ENCODE measurements at regions of chr14 and their contacts with region 1.

Region 1: DNA sequence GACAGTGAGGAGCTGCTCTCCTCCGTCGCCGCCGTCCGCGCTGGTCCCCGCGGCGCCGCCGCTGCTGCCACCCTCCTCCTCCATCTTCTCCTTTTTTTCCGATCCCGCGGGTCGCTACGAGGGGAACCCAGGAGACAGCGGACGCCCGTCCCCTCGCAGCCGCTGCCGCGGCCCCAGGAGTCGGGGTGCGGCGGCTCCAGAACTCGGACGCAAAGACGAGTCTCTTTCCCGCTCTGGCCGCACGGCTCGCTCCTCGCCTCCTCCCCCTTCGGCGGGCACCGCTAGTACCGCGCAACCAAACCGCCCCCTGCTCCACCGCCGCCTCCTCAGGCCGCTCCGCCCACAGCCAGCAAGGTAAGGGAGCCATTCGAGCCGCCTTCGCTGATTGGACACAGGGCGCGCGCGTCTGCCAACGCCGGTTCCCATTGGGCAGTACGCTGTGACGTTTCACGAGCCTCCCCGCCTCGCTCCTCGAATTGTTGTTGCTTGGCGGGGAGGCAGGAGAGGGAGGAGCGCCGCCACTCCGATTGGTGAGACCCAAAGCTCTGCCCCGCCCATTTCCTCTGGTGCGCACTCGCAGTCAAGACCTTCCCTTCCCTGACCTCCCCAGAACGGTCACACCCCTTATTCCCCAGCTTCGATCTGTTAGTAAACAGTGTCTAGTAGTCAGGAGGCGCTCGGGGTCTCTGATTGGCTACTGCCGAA is at the start of gene RPS6KA5:
- DNase-seq: peak; percentile 100
- ATAC-seq: peak; percentile 95
- H3K4me3 ChIP-seq: peak within 1 kb of the TSS; percentile 65 to 81 (median 80)
- H3K27ac ChIP-seq: peak within 1 kb of the TSS; percentile 93
- H3K4me1 ChIP-seq: peaks cover 44% of the 10 kb centered on the region
- H3K27me3 ChIP-seq: no peaks in the 10 kb centered on the region
- CTCF ChIP-seq: peak; percentile 16; the same call in 1 of the 2 replicates
- EP300 ChIP-seq: peak in 1 of 2 experiments; percentile 40; a peak in 1 of 4 replicates
- POLR2A ChIP-seq: peak in 1 of 2 experiments; percentile 61; a peak in 1 of 4 replicates
- RAD21 ChIP-seq: peak; percentile 71
- total RNA-seq, gene RPS6KA5: 0.58 and 0.65 TPM in 2 replicates

Region 2: DNA sequence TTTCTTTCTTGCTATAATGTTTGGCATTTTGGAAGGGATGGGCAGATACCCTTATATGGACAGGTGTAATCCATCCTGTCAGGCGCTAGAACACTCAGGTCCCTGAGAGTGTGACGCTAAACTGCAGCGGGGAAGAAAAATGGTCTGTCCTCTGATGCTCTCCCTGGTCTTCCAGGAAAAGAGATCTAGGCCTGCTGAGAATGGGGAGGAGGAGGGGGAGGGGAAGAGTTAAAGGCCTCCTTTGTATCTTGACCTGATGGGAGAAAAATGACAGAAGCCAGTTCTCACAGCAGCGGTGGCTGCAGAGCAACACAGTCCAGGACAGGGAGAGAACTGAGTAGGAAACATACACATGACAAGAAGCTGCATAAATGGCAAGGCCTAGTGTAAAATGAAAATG is 61.2 kb before region 1 on chr14:
- CTCF ChIA-PET with region 1: no interaction called
- POLR2A ChIA-PET with region 1: no interaction called
- in situ Hi-C with region 1: no loop called
- intact Hi-C with region 1: no loop called
- DNase-seq: no peak
- ATAC-seq: no peak
- H3K4me3 ChIP-seq: no peak overlapping the region
- H3K27ac ChIP-seq: no peak overlapping the region
- H3K4me1 ChIP-seq: no peaks in the 10 kb centered on the region
- H3K27me3 ChIP-seq: no peaks in the 10 kb centered on the region
- CTCF ChIP-seq: no peak
- EP300 ChIP-seq: no peak
- POLR2A ChIP-seq: no peak
- RAD21 ChIP-seq: no peak

Region 3: GRCh38 chr14:91012045-91012444 is 48.5 kb before region 1 on chr14:
- CTCF ChIA-PET with region 1: no interaction called
- POLR2A ChIA-PET with region 1: no interaction called
- in situ Hi-C with region 1: no loop called
- intact Hi-C with region 1: no loop called
- DNase-seq: no peak
- ATAC-seq: no peak
- H3K4me3 ChIP-seq: no peak overlapping the region
- H3K27ac ChIP-seq: no peak overlapping the region
- H3K4me1 ChIP-seq: no peaks in the 10 kb centered on the region
- H3K27me3 ChIP-seq: no peaks in the 10 kb centered on the region; a peak in 1 of 5 replicates
- CTCF ChIP-seq: no peak
- EP300 ChIP-seq: no peak
- POLR2A ChIP-seq: no peak
- RAD21 ChIP-seq: no peak

Region 4: GRCh38 chr14:91021991-91022621 is 38.4 kb before region 1 on chr14:
- CTCF ChIA-PET with region 1: no interaction called
- POLR2A ChIA-PET with region 1: no interaction called
- in situ Hi-C with region 1: no loop called
- intact Hi-C with region 1: no loop called
- DNase-seq: no peak
- ATAC-seq: no peak
- H3K4me3 ChIP-seq: no peak overlapping the region
- H3K27ac ChIP-seq: no peak overlapping the region
- H3K4me1 ChIP-seq: no peaks in the 10 kb centered on the region
- H3K27me3 ChIP-seq: no peaks in the 10 kb centered on the region
- CTCF ChIP-seq: no peak
- EP300 ChIP-seq: no peak
- POLR2A ChIP-seq: no peak
- RAD21 ChIP-seq: no peak

Region 5: GRCh38 chr14:91071773-91072172 is 11.3 kb after region 1 on chr14:
- CTCF ChIA-PET with region 1: no interaction called
- POLR2A ChIA-PET with region 1: no interaction called
- in situ Hi-C with region 1: no loop called
- intact Hi-C with region 1: no loop called
- DNase-seq: no peak
- ATAC-seq: no peak
- H3K4me3 ChIP-seq: no peak overlapping the region
- H3K27ac ChIP-seq: no peak overlapping the region
- H3K4me1 ChIP-seq: no peaks in the 10 kb centered on the region
- H3K27me3 ChIP-seq: no peaks in the 10 kb centered on the region; a peak in 1 of 5 replicates
- CTCF ChIP-seq: no peak
- EP300 ChIP-seq: no peak
- POLR2A ChIP-seq: no peak
- RAD21 ChIP-seq: no peak

Region 6: GRCh38 chr14:91114079-91115065 is 53.9 kb after region 1 on chr14:
- CTCF ChIA-PET with region 1: no interaction called
- POLR2A ChIA-PET with region 1: interaction called, 49 read pairs
- in situ Hi-C with region 1: no loop called
- intact Hi-C with region 1: no loop called
- DNase-seq: peak; percentile 79
- ATAC-seq: peak; percentile 97
- H3K4me3 ChIP-seq: peak overlapping the region; percentile 69 to 81 (median 80)
- H3K27ac ChIP-seq: peak overlapping the region; percentile 90
- H3K4me1 ChIP-seq: peaks cover 52% of the 10 kb centered on the region
- H3K27me3 ChIP-seq: no peaks in the 10 kb centered on the region; a peak in 1 of 5 replicates
- CTCF ChIP-seq: no peak
- EP300 ChIP-seq: no peak
- POLR2A ChIP-seq: peak; percentile 65 to 71
- RAD21 ChIP-seq: no peak

Measured in HepG2 (cell line).